Breast epithelium (tissue), 4 donors: ENCODE measurements at regions of chr1 and their contacts with region 1.

Region 1: DNA sequence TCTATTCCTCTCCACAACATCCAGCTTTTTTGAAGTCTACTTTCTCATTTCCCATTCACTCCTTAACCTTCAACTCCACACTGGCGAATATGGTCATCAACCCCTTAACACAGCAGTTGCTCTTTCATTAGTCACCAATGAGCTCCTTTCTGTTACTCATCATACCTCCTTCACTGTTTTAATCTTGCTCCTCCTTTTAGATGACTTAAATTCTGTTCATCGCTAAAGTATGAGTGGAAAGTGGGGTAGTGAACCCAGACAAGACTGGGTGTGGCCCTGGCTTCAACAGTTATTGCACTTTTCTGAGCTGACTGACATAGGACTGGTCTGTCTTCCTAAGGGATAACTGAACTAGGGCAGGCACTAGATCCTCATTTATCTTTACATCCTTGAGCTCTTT is 51.3 kb downstream of the AKT3 start:
- DNase-seq: no peak
- H3K4me3 ChIP-seq: no peak overlapping the region
- H3K27ac ChIP-seq: no peak overlapping the region
- H3K4me1 ChIP-seq: no peaks in the 10 kb centered on the region
- H3K27me3 ChIP-seq: no peaks in the 10 kb centered on the region
- CTCF ChIP-seq: no peak
- POLR2A ChIP-seq: no peak

Region 2: DNA sequence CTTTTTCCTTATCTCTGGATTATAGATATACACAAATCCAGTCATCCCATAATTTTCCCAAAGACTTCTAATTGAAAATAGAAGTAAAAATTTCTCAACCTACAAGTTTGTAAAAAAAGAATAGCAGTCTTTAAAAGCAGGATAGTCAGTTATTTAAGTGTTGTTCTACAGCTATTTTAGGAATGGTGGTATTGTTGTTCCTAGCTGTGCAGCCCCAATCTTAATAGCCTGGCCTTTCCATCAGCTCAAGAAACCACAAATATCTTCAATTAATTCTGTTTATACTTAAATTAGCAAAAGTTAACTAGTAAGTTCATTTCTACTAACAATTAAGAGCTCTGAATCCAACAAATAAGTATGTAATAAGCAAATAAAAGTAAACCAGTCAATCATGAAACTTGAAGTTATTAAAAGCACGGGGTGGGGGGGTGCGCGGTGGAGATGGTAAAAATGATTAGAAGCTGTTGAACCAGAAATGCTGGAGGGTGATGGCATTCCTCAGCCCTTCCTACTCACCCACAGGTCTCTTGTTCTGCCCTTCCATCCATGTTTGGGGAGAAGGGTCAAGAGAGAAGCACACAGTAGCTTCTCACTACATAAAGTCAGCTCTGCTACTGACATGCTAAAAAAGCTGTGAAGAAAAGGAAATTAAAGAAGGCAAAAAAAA is 12.3 kb before region 1 on chr1:
- intact Hi-C with region 1: no loop called
- DNase-seq: peak in 1 of 2 donors; percentile 20
- H3K4me3 ChIP-seq: no peak overlapping the region
- H3K27ac ChIP-seq: peak overlapping the region in 1 of 2 donors; percentile 41
- H3K4me1 ChIP-seq: peaks cover 0 to 7% of the 10 kb centered on the region in 2 donors
- H3K27me3 ChIP-seq: no peaks in the 10 kb centered on the region
- CTCF ChIP-seq: no peak
- POLR2A ChIP-seq: no peak

Region 3: GRCh38 chr1:244239261-244239770 is 440.6 kb after region 1 on chr1:
- intact Hi-C with region 1: loop called (anchors 5 kb)
- DNase-seq: no peak
- H3K4me3 ChIP-seq: no peak overlapping the region
- H3K27ac ChIP-seq: no peak overlapping the region
- H3K4me1 ChIP-seq: no peaks in the 10 kb centered on the region
- H3K27me3 ChIP-seq: no peaks in the 10 kb centered on the region
- CTCF ChIP-seq: no peak
- POLR2A ChIP-seq: no peak